WTC11 (cell line): ENCODE measurements at regions of chr1 and their contacts with region 1.

Region 1: GRCh38 chr1:156480411-156481192 is 20.0 kb downstream of the MEF2D start:
- DNase-seq: peak; percentile 91
- ATAC-seq: peak; percentile 87
- H3K4me3 Mint-ChIP-seq: no peak overlapping the region
- H3K27ac Mint-ChIP-seq: peak overlapping the region; percentile 14
- H3K4me1 Mint-ChIP-seq: peaks cover 27% of the 10 kb centered on the region
- H3K27me3 Mint-ChIP-seq: no peaks in the 10 kb centered on the region
- CTCF ChIP-seq: peak; percentile 73

Region 2: GRCh38 chr1:156319664-156320063 is 160.9 kb before region 1 on chr1:
- CTCF ChIA-PET with region 1: no interaction called
- POLR2A ChIA-PET with region 1: no interaction called
- DNase-seq: no peak
- ATAC-seq: no peak
- H3K4me3 Mint-ChIP-seq: no peak overlapping the region
- H3K27ac Mint-ChIP-seq: no peak overlapping the region
- H3K4me1 Mint-ChIP-seq: no peaks in the 10 kb centered on the region
- H3K27me3 Mint-ChIP-seq: no peaks in the 10 kb centered on the region
- CTCF ChIP-seq: no peak

Region 3: DNA sequence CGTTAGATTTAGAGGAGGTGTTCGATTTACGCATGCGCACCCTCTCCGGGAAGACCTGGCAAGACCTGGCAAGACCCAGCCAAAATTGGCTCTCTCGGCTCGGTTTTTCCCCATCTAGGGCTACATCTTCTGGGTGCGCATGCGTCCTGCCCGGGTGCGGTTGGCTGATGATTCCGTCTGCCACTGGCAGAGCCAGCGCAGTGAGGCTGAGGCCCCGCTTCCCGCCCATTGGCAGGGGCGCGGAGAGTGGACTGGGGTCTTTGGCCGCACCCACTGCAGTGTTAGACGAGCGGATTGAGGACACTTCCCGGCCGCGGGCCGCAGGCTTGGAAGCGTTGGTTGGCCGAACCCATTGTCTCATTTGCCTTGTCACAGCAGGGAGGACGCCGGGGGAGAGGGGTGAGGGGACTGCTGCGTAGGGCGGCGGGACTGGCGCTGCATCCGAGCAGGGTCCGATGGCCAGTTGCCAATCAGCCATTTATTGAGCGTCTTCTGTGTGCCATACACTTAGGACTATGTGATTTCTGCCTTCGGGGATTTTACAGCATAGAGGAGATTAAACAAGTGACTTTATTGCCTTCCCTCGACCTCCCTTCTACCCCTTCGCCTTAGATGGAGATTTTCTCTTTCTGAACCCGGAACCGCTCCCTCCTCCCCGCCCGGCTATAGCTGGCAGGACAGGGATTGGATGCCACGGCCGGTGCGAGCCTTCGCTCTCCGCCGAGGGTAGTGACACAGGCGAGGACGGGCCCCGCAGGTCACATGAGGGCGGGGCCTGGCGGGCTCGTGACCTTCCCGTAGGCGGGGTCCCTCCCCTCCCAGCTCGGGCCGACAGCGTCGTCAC is 23.8 kb before region 1 on chr1:
- CTCF ChIA-PET with region 1: interaction called, 61 read pairs
- POLR2A ChIA-PET with region 1: interaction called, 4 read pairs
- DNase-seq: peak; percentile 97
- ATAC-seq: peak; percentile 84
- H3K4me3 Mint-ChIP-seq: peak overlapping the region; percentile 89
- H3K27ac Mint-ChIP-seq: peak overlapping the region; percentile 99
- H3K4me1 Mint-ChIP-seq: peaks cover 15% of the 10 kb centered on the region
- H3K27me3 Mint-ChIP-seq: no peaks in the 10 kb centered on the region
- CTCF ChIP-seq: no peak

Region 4: GRCh38 chr1:156510709-156511108 is 30.1 kb after region 1 on chr1:
- CTCF ChIA-PET with region 1: interaction called, 142 read pairs
- POLR2A ChIA-PET with region 1: interaction called, 19 read pairs
- DNase-seq: no peak
- ATAC-seq: no peak
- H3K4me3 Mint-ChIP-seq: no peak overlapping the region
- H3K27ac Mint-ChIP-seq: no peak overlapping the region
- H3K4me1 Mint-ChIP-seq: peaks cover 24% of the 10 kb centered on the region
- H3K27me3 Mint-ChIP-seq: peaks cover 11% of the 10 kb centered on the region
- CTCF ChIP-seq: no peak

Region 5: DNA sequence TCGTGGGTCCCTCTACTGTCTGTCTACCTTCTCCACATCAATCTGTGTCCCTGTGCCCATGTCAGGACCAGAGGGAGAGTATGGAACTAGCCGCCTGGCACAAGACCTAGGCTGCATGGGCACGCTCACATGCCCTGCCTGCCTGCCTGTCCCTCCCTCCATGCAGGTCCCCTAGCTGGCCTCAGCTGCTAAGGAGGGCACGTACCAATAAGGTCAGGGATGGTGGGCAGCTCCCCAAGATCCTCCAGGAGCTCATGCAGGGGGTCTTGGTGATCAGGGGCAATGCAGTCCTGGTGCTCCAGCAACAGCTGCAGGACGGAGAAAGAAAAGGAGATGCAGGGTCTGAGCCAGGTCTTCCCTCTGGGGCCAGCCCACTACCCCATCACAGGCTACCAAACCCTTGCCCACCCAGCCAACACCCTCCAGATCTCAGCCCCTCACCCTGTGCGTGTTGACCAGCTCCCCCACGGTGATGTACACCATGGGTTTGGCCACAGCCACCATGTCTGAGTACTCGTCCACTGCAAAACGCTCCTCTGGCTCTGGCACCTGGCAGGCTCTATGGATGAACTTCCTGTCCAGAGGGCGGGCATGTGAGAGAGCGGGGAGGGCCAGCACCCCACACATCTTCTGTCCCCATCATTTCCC is 53.1 kb after region 1 on chr1:
- CTCF ChIA-PET with region 1: interaction called, 73 read pairs
- POLR2A ChIA-PET with region 1: no interaction called
- DNase-seq: no peak
- ATAC-seq: no peak
- H3K4me3 Mint-ChIP-seq: no peak overlapping the region
- H3K27ac Mint-ChIP-seq: no peak overlapping the region
- H3K4me1 Mint-ChIP-seq: peaks cover 2% of the 10 kb centered on the region; the same call in 1 of the 2 replicates
- H3K27me3 Mint-ChIP-seq: no peaks in the 10 kb centered on the region
- CTCF ChIP-seq: no peak

Region 6: DNA sequence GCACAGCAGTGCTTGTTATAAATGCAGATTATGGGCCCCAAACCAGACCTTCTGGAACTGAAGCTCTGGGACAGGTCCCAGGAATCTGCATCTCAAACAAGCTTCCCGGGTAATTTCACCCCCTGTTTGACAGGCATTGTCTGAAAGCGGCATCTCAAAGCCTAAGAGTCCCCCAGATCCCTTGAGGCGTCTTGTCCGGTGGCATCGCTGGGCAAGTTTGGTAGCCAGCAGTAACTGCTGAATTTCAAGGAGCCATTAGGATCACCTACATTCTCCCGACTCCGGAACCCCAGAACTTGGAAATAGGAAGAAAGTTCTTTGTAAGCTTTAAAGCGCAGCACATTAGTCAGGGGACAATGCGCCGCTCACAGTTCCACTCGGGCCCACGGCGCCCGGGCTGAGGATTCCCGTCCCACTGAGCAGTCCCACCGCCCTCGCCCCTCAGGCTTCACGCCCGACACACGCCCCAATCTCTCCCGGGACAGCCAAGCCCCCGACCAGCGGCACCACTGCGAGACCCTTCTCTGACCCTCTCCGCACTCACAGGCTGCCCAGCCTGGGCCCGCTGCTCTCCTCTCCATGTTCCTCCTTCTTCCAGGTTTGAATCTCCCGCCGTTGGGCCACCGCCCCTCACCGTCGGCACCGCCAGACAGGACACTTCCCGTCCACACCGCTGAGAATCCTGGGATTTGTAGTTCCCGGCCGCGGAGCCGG is 91.5 kb after region 1 on chr1 and contains the start of gene IQGAP3:
- CTCF ChIA-PET with region 1: interaction called, 15 read pairs
- POLR2A ChIA-PET with region 1: no interaction called
- DNase-seq: peak; percentile 95
- ATAC-seq: peak; percentile 98
- H3K4me3 Mint-ChIP-seq: peak within 1 kb of the TSS; percentile 99
- H3K27ac Mint-ChIP-seq: peak within 1 kb of the TSS; percentile 61; the same call in 1 of the 2 replicates
- H3K4me1 Mint-ChIP-seq: peaks cover 15% of the 10 kb centered on the region
- H3K27me3 Mint-ChIP-seq: no peaks in the 10 kb centered on the region; the same call in 1 of the 2 replicates
- CTCF ChIP-seq: no peak
- total RNA-seq, gene IQGAP3: 30.8 to 33.3 TPM (median 33.3 TPM) in 3 replicates

Region 7: GRCh38 chr1:156608036-156608674 is 127.6 kb after region 1 on chr1:
- CTCF ChIA-PET with region 1: interaction called, 11 read pairs
- POLR2A ChIA-PET with region 1: no interaction called
- DNase-seq: peak; percentile 53
- ATAC-seq: peak; percentile 97
- H3K4me3 Mint-ChIP-seq: no peak overlapping the region
- H3K27ac Mint-ChIP-seq: no peak overlapping the region
- H3K4me1 Mint-ChIP-seq: peaks cover 4% of the 10 kb centered on the region; the same call in 1 of the 2 replicates
- H3K27me3 Mint-ChIP-seq: peaks cover 5% of the 10 kb centered on the region; the same call in 1 of the 2 replicates
- CTCF ChIP-seq: no peak; the same call in 1 of the 2 replicates